ENCODE measurements at regions of chr13 and their contacts with region 1.

Region 1: DNA sequence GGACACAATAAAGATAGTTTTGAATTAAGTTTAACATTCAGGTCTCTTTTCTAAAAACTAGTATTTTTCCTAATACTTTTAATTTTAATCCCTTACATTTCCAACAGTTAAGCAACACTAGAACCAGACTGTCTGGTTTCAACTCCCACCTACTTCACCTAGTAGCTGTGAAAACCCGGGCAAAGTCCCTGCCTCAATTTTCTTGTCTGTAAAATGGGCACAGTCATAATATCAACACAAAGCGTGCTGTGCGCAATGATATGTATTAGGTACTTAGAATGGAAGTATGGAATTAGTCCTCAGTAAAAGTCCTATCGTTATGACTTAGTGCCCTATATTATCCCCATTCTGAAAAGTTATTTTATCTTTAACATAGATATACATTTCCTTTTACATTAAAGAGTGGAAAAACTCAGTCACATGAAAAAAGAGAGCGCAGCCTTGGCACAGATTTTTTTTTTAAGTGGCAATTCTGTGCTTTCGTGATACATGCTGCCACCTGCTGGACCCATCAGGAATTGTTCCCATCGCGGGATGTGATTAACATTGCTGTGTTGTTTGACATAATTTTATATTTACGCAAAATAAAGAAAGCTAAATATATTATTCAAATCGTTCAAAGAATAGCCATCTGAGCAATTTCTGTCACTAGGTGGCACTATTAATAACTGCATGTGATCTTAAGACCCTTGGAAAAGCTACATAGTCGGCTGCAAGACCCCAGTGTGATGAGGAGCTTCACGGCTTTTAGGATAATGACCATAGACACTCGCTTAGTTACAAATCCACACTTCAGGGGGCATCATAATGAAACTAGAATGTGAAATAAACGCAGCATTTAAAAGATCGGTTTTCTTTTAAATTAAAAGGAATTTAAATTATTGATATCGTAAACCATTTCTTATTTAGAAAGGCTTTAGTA is 59.9 kb downstream of the LIG4 start:
- DNase-seq: peak; percentile 64 to 75
- H3K4me3 ChIP-seq: no peak overlapping the region
- H3K4me3 Mint-ChIP-seq: no peak overlapping the region
- H3K27ac Mint-ChIP-seq: peak overlapping the region; percentile 98
- H3K4me1 ChIP-seq: peaks cover 25% of the 10 kb centered on the region
- H3K4me1 Mint-ChIP-seq: peaks cover 11% of the 10 kb centered on the region
- H3K27me3 ChIP-seq: no peaks in the 10 kb centered on the region
- H3K27me3 Mint-ChIP-seq: no peaks in the 10 kb centered on the region
- CTCF ChIP-seq: peak; percentile 59 to 89

Region 2: DNA sequence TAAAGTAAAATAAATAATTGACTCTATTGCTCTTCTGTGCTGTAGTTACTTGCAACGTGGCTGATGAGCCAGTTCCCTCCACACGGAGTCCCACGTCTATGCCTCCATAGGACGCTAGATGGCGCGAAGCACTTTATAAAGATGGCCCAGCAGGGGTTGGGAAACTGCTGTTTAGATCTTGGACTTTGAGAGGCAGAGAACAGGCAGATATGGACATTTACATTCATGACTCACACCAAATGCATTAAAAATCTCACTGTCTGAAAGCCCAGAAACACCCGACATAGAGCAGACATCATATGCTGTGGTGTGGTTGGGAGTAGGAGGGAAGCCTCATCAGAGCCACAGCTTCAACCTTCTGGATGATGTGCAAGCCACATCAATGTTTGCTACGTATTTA is 944.4 kb before region 1 on chr13:
- CTCF ChIA-PET with region 1: interaction called, 3 read pairs
- POLR2A ChIA-PET with region 1: no interaction called
- intact Hi-C with region 1: loop called (anchors 1 kb)
- DNase-seq: peak; percentile 79 to 81
- H3K4me3 ChIP-seq: no peak overlapping the region
- H3K4me3 Mint-ChIP-seq: no peak overlapping the region
- H3K27ac Mint-ChIP-seq: no peak overlapping the region
- H3K4me1 ChIP-seq: no peaks in the 10 kb centered on the region
- H3K4me1 Mint-ChIP-seq: peaks cover 12% of the 10 kb centered on the region
- H3K27me3 ChIP-seq: 0 out of 2 replicates have a peak, but pooled peaks cover 2% of the 10 kb centered on the region
- H3K27me3 Mint-ChIP-seq: peaks cover 16% of the 10 kb centered on the region
- CTCF ChIP-seq: peak; percentile 86 to 97

Region 3: DNA sequence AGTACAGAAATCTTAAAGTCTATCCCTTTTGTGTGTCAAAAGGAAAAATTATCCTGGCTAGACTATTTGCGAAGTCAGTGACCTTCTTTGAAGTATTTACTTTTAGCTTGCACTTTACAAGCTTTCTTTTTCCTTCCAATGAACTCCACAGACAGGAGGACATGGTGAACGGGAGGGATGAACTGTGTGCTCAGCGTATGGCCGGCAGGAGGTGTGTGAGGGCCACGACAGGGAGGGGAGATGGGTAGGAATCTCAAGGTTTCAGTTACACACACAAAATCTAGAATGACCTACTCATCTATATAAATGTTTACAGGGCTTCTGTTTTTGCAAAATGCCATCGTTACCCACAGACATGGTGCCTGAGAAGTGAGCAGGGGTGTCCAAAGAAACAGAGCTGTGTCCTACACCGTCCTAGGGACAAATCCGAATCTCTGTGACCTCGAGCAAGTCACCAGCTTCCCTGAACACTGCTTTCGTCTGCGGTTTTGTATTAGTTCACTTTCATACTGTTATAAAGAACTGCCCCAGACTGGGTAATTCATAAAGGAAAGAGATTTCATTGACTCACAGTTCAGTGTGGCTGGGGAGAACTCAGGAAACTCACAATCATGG is 477.3 kb before region 1 on chr13:
- CTCF ChIA-PET with region 1: interaction called, 13 read pairs
- POLR2A ChIA-PET with region 1: no interaction called
- intact Hi-C with region 1: loop called (anchors 1 kb)
- DNase-seq: peak in 1 of 2 experiments; percentile 11
- H3K4me3 ChIP-seq: no peak overlapping the region
- H3K4me3 Mint-ChIP-seq: no peak overlapping the region
- H3K27ac Mint-ChIP-seq: no peak overlapping the region
- H3K4me1 ChIP-seq: no peaks in the 10 kb centered on the region
- H3K4me1 Mint-ChIP-seq: no peaks in the 10 kb centered on the region
- H3K27me3 ChIP-seq: no peaks in the 10 kb centered on the region
- H3K27me3 Mint-ChIP-seq: no peaks in the 10 kb centered on the region
- CTCF ChIP-seq: peak; percentile 18 to 22

Region 4: DNA sequence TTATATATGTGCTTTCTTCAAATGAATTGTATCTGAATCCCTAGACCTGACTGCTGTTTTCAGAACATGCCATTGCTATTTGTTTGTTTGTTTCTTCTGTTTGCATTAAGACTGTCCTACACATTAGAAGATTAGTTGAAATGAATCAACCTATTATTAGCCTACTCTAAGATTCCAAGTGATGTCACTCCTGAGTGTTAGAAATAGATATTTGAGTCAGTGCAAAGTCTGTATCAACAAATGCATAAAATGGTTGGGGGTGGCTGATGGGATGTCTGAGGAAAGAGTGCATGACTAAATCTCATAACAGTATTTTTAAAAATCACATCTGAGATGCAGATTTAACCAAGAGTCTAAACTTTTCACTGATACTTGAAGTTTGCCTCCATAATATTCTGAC is 193.6 kb before region 1 on chr13:
- CTCF ChIA-PET with region 1: no interaction called
- POLR2A ChIA-PET with region 1: no interaction called
- intact Hi-C with region 1: loop called (anchors 1 kb)
- DNase-seq: no peak
- H3K4me3 ChIP-seq: no peak overlapping the region
- H3K4me3 Mint-ChIP-seq: peak overlapping the region; percentile 7
- H3K27ac Mint-ChIP-seq: no peak overlapping the region
- H3K4me1 ChIP-seq: peaks cover 13% of the 10 kb centered on the region
- H3K4me1 Mint-ChIP-seq: peaks cover 8% of the 10 kb centered on the region
- H3K27me3 ChIP-seq: no peaks in the 10 kb centered on the region
- H3K27me3 Mint-ChIP-seq: no peaks in the 10 kb centered on the region
- CTCF ChIP-seq: no peak

Region 5: DNA sequence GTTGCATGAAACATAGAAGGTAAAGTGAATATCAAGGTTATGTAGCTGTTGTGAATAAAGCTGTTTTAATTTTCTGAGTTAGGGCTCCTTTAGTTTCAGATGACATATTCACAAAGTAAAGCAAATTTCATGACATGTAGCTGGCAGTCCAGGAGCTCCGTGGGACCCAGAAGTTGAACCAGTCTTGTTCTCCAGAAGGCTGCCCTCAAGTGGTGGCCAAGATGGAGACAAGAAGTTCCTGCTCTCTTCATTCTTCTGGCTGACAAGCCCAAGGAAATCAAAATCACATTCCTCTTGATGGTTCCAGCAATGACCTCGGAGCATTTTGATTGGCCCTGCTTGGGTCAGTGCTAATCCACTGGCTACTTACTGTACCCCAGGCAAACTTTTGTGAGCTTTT is 68.8 kb before region 1 on chr13:
- CTCF ChIA-PET with region 1: no interaction called
- POLR2A ChIA-PET with region 1: no interaction called
- intact Hi-C with region 1: loop called (anchors 1 kb)
- DNase-seq: peak; percentile 37 to 54
- H3K4me3 ChIP-seq: no peak overlapping the region
- H3K4me3 Mint-ChIP-seq: no peak overlapping the region
- H3K27ac Mint-ChIP-seq: no peak overlapping the region
- H3K4me1 ChIP-seq: no peaks in the 10 kb centered on the region
- H3K4me1 Mint-ChIP-seq: no peaks in the 10 kb centered on the region
- H3K27me3 ChIP-seq: no peaks in the 10 kb centered on the region
- H3K27me3 Mint-ChIP-seq: no peaks in the 10 kb centered on the region
- CTCF ChIP-seq: peak in 1 of 2 experiments; percentile 34

Region 6: DNA sequence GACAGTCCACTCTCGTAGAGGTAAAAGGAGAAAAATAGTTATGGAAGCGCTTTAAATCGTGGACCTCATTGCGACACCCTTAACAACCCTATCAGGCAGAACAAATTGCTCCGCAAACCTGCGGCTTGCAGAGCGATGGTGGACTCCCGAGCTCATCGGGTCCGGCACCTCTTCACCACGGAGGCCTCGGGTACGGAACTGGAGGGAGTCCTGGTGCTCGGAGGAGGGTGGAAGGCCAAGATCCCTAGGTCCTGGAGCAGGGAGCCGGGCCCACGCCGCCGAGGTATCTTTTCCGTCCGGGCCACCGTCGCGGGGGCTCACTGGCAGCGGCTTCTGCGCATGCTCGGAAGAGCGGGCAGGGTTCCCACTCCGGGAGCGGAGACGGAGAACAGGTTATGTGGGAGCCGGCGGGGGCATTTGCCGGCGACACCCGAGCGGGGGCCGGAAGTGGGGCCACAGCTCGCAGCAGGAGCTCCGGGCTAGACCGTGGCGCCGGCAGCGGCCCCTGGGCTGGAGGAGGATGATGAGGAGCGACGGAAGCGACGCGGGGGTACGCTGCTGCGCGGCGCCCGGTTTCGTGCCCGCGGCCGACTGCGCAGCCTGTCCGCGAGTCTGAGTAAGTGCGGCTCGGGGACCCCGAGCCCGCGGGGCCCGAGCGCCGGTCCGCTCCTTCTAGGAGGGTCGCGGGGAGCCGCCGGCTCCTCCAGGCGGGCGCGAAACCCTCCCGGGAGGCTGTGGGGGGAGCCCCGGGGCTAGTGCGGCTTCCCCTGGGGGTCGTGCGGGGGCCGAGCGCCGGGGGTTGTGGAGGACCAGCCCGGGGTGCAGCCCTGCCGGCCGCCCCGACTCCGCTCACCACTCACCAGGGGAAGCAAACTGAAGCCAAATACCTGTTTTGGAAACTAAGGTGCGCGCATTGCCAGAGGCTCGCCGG is 62.9 kb after region 1 on chr13 and contains the start of gene ABHD13:
- CTCF ChIA-PET with region 1: interaction called, 3 read pairs
- POLR2A ChIA-PET with region 1: interaction called, 3 read pairs
- intact Hi-C with region 1: loop called (anchors 1 kb)
- DNase-seq: peak; percentile 93 to 95
- H3K4me3 ChIP-seq: peak within 1 kb of the TSS; percentile 97
- H3K4me3 Mint-ChIP-seq: peak within 1 kb of the TSS; percentile 83
- H3K27ac Mint-ChIP-seq: peak within 1 kb of the TSS; percentile 86
- H3K4me1 ChIP-seq: peaks cover 15% of the 10 kb centered on the region
- H3K4me1 Mint-ChIP-seq: peaks cover 7% of the 10 kb centered on the region
- H3K27me3 ChIP-seq: no peaks in the 10 kb centered on the region
- H3K27me3 Mint-ChIP-seq: no peaks in the 10 kb centered on the region
- CTCF ChIP-seq: peak in 1 of 2 experiments; percentile 1
- total RNA-seq, gene ABHD13: 9.5 and 9.9 TPM in 2 replicates